Right ventricle myocardium inferior (tissue), 1 donor: ENCODE measurements at regions of chr19 and their contacts with region 1.

Region 1: GRCh38 chr19:16429066-16429758 is 42.6 kb downstream of the EPS15L1 start:
- DNase-seq: peak; percentile 78
- ATAC-seq: peak; percentile 85

Region 2: DNA sequence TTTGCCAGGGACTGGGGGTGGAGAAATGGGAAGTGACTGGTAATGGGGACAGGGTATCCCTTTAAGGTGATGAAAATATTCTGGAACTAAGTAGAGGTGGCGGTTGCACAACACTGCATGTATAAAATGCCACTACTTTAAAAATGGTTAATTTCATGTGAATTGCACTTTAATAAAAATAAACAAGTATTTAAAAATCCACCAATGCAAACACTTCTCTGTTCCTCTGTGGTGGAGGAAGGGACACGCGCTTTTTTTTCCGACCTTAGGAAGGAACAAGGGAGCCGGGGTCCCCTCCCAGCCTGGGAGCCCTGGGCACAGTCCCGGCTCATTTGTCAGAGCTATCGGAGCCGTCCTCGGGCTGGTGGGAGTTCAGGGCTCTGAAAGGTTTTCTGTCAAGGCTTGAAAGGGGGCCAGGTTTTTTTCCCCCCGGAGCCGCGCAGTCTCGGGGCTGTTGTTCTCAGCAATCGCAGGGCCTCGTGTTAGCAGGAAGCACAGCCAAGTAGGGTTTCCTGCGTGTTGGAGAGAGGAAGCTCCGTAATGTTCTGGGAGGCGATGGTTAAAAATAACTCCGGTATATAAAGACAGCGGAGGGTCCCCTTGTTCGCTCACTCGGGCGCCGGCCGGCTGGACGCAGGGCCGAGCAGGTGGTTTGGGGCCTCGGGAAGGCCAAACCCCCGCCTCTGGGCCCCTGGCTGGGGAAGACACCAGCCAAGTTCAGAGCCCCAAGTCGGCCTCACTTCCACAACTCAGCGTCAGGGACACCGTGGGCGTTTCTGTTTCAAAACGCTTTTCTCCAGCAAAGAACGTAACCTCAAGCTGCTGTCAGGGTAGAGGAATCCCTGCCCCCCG is 145.8 kb before region 1 on chr19:
- intact Hi-C with region 1: no loop called
- DNase-seq: peak; percentile 89
- ATAC-seq: peak; percentile 88

Region 3: DNA sequence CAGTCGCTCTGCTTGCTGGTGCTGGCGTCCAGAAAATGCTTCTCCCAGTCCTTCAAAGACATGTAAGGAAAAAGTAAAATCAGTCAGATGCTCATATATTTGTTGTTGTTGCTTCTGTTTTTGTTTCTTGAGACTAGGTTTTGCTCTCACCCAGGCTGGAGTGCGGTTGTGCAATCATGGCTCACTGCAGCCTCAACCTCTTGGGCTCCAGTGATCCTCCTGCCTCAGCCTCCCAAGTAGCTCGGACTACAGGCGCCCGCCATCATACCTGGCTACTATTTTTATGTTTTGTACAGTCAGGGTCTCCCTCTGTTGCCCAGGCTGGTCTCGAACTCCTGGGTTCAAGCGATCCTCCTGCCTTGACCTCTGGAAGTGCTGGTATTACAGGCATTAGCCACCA is 53.5 kb after region 1 on chr19:
- intact Hi-C with region 1: loop called (anchors 5 kb)
- DNase-seq: no peak
- ATAC-seq: no peak

Region 4: DNA sequence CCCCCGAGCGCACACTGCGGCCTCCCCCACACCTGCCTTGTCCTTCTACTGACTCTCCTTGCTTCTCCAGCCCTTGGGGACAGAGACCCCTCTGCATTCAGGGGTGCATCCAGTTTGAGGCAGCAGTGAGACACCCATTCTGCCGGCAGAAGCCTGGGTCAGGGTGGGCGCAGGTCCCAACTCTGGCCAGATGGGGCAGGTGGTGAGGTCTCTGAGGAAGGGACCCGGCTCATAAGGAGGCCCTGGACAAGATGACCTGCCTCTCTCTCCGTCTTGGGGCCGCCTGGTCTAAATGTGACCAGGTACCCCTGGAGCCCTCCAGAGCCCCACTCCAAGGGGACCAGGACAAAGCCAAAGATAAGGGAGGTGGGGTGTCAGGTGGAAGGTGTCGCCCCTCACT is 106.9 kb after region 1 on chr19:
- intact Hi-C with region 1: loop called (anchors 5 kb)
- DNase-seq: no peak
- ATAC-seq: no peak